CD4-positive, alpha-beta T cell (primary cell): ENCODE measurements at regions of chr6 and their contacts with region 1.

Region 1: GRCh38 chr6:88982720-88983119 is 19.3 kb upstream of the RNGTT start:
- DNase-seq: peak in 4 of 14 experiments; percentile 24 to 79 (median 75)
- ATAC-seq: peak; percentile 89
- H3K4me3 ChIP-seq: no peak overlapping the region
- H3K4me3 Mint-ChIP-seq: no peak overlapping the region
- H3K27ac ChIP-seq: no peak overlapping the region
- H3K27ac Mint-ChIP-seq: no peak overlapping the region
- H3K4me1 ChIP-seq: no peaks in the 10 kb centered on the region
- H3K4me1 Mint-ChIP-seq: no peaks in the 10 kb centered on the region
- H3K27me3 ChIP-seq: no peaks in the 10 kb centered on the region
- H3K27me3 Mint-ChIP-seq: no peaks in the 10 kb centered on the region
- CTCF ChIP-seq: peak; percentile 82

Region 2: GRCh38 chr6:88890860-88891845 is 91.6 kb before region 1 on chr6:
- CTCF ChIA-PET with region 1: no interaction called
- POLR2A ChIA-PET with region 1: no interaction called
- intact Hi-C with region 1: no loop called
- DNase-seq: no peak
- ATAC-seq: no peak
- H3K4me3 ChIP-seq: no peak overlapping the region
- H3K4me3 Mint-ChIP-seq: no peak overlapping the region
- H3K27ac ChIP-seq: no peak overlapping the region
- H3K27ac Mint-ChIP-seq: no peak overlapping the region
- H3K4me1 ChIP-seq: no peaks in the 10 kb centered on the region
- H3K4me1 Mint-ChIP-seq: no peaks in the 10 kb centered on the region
- H3K27me3 ChIP-seq: no peaks in the 10 kb centered on the region
- H3K27me3 Mint-ChIP-seq: no peaks in the 10 kb centered on the region
- CTCF ChIP-seq: no peak

Region 3: GRCh38 chr6:89145787-89146646 is 163.3 kb after region 1 on chr6 and contains the start of gene PM20D2:
- CTCF ChIA-PET with region 1: interaction called, 3 read pairs
- POLR2A ChIA-PET with region 1: interaction called, 9 read pairs
- intact Hi-C with region 1: loop called in 1 of 2 experiments (anchors 10 kb)
- DNase-seq: peak; percentile 33 to 78 (median 54)
- ATAC-seq: peak; percentile 73
- H3K4me3 ChIP-seq: peak within 1 kb of the TSS; percentile 74
- H3K4me3 Mint-ChIP-seq: peak within 1 kb of the TSS; percentile 99
- H3K27ac ChIP-seq: peak within 1 kb of the TSS; percentile 45 to 62
- H3K27ac Mint-ChIP-seq: peak within 1 kb of the TSS; percentile 93
- H3K4me1 ChIP-seq: peaks cover 12% of the 10 kb centered on the region
- H3K4me1 Mint-ChIP-seq: peaks cover 37% of the 10 kb centered on the region
- H3K27me3 ChIP-seq: no peaks in the 10 kb centered on the region
- H3K27me3 Mint-ChIP-seq: no peaks in the 10 kb centered on the region
- CTCF ChIP-seq: no peak
- total RNA-seq, gene PM20D2: 5.2 to 5.3 TPM

Region 4: DNA sequence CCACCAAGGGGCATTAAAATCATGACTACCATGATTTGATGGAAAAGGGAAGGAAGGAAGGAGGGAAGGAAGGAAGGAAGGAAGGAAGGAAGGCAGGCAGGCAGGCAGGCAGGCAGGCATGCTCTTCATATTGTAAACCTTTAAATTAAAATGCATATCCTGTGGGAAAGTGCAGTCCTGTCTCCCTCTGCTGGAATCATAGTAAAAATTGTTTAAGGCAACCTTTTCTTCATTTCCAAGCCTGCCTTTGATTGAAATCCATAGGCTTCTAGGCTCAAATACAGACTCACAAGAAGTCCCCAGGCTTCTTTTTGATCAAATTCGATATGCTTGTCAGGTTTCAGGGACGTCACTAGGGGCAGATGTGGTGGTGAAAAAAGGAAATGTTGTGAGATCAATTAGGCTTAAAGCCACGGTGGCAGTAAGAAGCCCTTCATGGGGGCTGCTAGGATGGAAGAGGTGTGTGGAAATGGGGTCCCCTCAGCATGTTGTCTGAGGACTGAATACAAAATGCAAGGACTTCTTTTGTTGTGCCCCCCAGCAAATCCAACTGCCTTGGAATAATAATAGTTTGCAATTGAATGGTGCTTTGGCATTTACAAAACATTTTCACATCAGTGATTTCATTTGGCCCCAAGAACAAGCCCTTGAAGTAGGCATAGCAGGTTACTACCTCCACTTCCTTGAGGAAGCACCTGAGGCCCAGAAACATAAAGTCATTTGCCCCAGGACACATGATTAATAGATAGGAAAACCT is 260.0 kb after region 1 on chr6:
- CTCF ChIA-PET with region 1: interaction called, 16 read pairs
- POLR2A ChIA-PET with region 1: interaction called, 3 read pairs
- intact Hi-C with region 1: loop called (anchors 1 kb)
- DNase-seq: peak in 4 of 14 experiments; percentile 11 to 54 (median 49)
- ATAC-seq: peak; percentile 34
- H3K4me3 ChIP-seq: no peak overlapping the region
- H3K4me3 Mint-ChIP-seq: no peak overlapping the region
- H3K27ac ChIP-seq: no peak overlapping the region
- H3K27ac Mint-ChIP-seq: no peak overlapping the region
- H3K4me1 ChIP-seq: peaks cover 13% of the 10 kb centered on the region
- H3K4me1 Mint-ChIP-seq: peaks cover 20% of the 10 kb centered on the region
- H3K27me3 ChIP-seq: no peaks in the 10 kb centered on the region
- H3K27me3 Mint-ChIP-seq: peaks cover 8% of the 10 kb centered on the region
- CTCF ChIP-seq: peak; percentile 38

Region 5: DNA sequence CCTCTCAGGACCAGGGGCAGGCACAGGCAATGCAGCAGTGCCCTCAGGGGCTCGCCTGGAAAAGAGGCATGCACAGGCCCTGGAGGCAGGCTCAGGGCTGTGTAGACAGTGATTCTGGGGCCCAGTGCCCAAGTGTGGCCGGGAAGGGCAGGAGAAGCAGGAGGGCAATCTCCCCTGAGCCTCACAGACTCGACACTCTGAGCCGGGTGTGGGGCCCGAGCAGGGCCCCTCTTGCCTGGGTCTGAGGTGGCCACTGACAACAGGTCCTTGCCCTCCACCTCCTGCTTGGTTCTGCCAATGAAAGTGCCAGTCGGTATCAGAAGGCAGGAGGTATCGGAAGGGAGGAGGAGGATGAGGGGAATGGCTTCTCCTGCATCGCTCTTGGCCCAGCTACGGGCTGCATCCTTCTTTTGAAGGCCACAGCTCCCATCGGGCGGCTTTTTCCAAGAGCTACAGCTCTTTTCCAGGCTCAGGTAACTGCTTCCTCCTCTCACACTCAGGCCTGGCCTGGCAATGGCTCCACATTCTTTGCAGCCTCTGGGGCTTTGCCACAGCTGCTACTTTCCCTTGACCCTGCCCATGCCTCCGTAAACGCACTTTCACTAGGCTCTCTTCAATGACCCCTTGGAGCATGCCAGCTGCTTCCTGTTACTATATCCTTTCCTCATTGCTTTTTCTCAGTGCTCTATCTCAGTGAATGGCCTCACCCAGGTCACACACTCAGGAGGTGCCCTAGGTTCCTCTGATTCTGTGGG is 307.9 kb after region 1 on chr6:
- CTCF ChIA-PET with region 1: no interaction called
- POLR2A ChIA-PET with region 1: no interaction called
- intact Hi-C with region 1: no loop called
- DNase-seq: no peak
- ATAC-seq: no peak
- H3K4me3 ChIP-seq: no peak overlapping the region
- H3K4me3 Mint-ChIP-seq: no peak overlapping the region
- H3K27ac ChIP-seq: no peak overlapping the region
- H3K27ac Mint-ChIP-seq: no peak overlapping the region
- H3K4me1 ChIP-seq: no peaks in the 10 kb centered on the region
- H3K4me1 Mint-ChIP-seq: no peaks in the 10 kb centered on the region
- H3K27me3 ChIP-seq: no peaks in the 10 kb centered on the region
- H3K27me3 Mint-ChIP-seq: no peaks in the 10 kb centered on the region
- CTCF ChIP-seq: no peak

Region 6: GRCh38 chr6:89610149-89610642 is 627.5 kb after region 1 on chr6:
- CTCF ChIA-PET with region 1: no interaction called
- POLR2A ChIA-PET with region 1: no interaction called
- intact Hi-C with region 1: loop called (anchors 1 to 2 kb)
- DNase-seq: peak; percentile 67 to 87 (median 75)
- ATAC-seq: peak; percentile 77
- H3K4me3 ChIP-seq: no peak overlapping the region
- H3K4me3 Mint-ChIP-seq: no peak overlapping the region
- H3K27ac ChIP-seq: no peak overlapping the region
- H3K27ac Mint-ChIP-seq: no peak overlapping the region
- H3K4me1 ChIP-seq: no peaks in the 10 kb centered on the region
- H3K4me1 Mint-ChIP-seq: no peaks in the 10 kb centered on the region
- H3K27me3 ChIP-seq: no peaks in the 10 kb centered on the region
- H3K27me3 Mint-ChIP-seq: no peaks in the 10 kb centered on the region
- CTCF ChIP-seq: peak; percentile 86